Activated T-helper 2 cell treated with anti-CD3 and anti-CD28 coated beads, Interferon-gamma antibody, Interleukin-2, Interleukin-4, amounts not matched to agents 10 μg/mL and 5 μg/mL and 100 μg/mL, durations not matched to agents 14 hours and 24 hours and 36 hours (primary cell): ENCODE measurements at regions of chr11 and their contacts with region 1.

Region 1: GRCh38 chr11:16613512-16614381 is 124.7 kb upstream of the C11orf58 start:
- DNase-seq: peak; percentile 58
- H3K4me3 Mint-ChIP-seq: peak overlapping the region; percentile 60
- H3K27ac Mint-ChIP-seq: no peak overlapping the region
- H3K4me1 Mint-ChIP-seq: peaks cover 17% of the 10 kb centered on the region
- H3K27me3 Mint-ChIP-seq: peaks cover 44% of the 10 kb centered on the region

Region 2: GRCh38 chr11:15650105-15650938 is 963.4 kb before region 1 on chr11:
- intact Hi-C with region 1: loop called (anchors 1 kb)
- DNase-seq: peak; percentile 68
- H3K4me3 Mint-ChIP-seq: no peak overlapping the region
- H3K27ac Mint-ChIP-seq: no peak overlapping the region
- H3K4me1 Mint-ChIP-seq: peaks cover 3% of the 10 kb centered on the region
- H3K27me3 Mint-ChIP-seq: peaks cover 19% of the 10 kb centered on the region

Region 3: GRCh38 chr11:15770798-15771414 is 842.8 kb before region 1 on chr11:
- intact Hi-C with region 1: loop called (anchors 5 kb)
- DNase-seq: no peak
- H3K4me3 Mint-ChIP-seq: no peak overlapping the region
- H3K27ac Mint-ChIP-seq: no peak overlapping the region
- H3K4me1 Mint-ChIP-seq: no peaks in the 10 kb centered on the region
- H3K27me3 Mint-ChIP-seq: no peaks in the 10 kb centered on the region

Region 4: GRCh38 chr11:17722000-17722643 is 1108.4 kb after region 1 on chr11:
- intact Hi-C with region 1: loop called (anchors 5 kb)
- DNase-seq: no peak
- H3K4me3 Mint-ChIP-seq: no peak overlapping the region
- H3K27ac Mint-ChIP-seq: no peak overlapping the region
- H3K4me1 Mint-ChIP-seq: no peaks in the 10 kb centered on the region
- H3K27me3 Mint-ChIP-seq: peaks cover 50% of the 10 kb centered on the region